Heart right ventricle (tissue), 16 donors: ENCODE measurements at regions of chr15 and their contacts with region 1.

Region 1: DNA sequence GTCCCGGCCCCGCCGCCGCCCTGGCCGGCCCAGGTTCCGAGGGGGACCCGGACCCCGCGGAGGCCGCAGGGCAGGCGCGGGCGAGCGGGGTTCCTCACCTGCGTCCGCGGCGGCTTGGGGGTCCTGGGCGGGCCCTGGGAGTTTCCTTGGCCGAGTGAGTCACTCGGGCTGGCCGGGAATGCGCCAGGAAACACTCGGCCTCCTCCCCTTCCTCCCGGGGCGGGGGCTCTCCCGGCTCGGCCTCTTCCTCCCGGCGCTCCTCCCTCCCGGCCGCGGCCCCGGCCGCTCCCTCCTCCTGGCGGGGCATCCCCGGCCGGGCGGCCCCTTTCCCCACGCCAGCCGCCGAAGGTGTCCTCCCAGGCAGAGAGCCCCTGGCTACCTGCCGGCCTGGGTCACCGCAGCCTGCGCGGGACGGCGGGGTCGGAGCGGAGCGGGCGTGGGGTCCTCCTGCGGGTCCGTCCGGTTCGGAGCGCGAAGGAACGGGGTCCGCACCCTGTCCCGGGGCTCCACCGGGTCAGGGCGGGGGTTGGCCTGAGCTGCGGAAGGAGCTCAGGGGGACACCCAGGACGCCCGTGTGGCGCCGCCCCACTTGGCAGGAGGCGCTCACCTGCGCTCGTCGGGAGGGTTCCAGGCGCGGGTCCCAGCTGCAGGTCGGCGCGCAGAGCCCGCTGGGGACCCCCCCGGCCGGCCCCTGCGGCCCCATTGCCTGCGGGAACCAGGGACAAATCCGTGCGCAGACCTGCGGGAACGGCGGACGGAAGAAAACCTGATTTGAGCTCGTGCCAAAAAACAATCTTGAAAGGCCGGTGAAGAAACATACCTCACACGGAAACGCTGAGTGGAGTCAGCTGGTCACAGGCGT is at the start of gene CYFIP1:
- DNase-seq: peak; percentile 90
- ATAC-seq: peak; percentile 95 to 98 (median 97)
- H3K4me3 ChIP-seq: peak within 1 kb of the TSS; percentile 48 to 95 (median 92)
- H3K27ac ChIP-seq: peak within 1 kb of the TSS; percentile 83 to 95 (median 88)
- H3K4me1 ChIP-seq: peaks cover 3 to 31% (median 15%) of the 10 kb centered on the region in 9 donors
- H3K27me3 ChIP-seq: peaks cover 0 to 15% (median 0%) of the 10 kb centered on the region in 7 donors
- CTCF ChIP-seq: no peak
- total RNA-seq, gene CYFIP1: 17.6 to 56.6 (median 28.7) TPM

Region 2: GRCh38 chr15:22838292-22839042 is 142.0 kb before region 1 on chr15 and contains the start of gene NIPA2:
- intact Hi-C with region 1: loop called in 1 of 10 experiments (anchors 5 kb)
- DNase-seq: peak; percentile 98 to 99
- ATAC-seq: peak; percentile 99 to 100 (median 99)
- H3K4me3 ChIP-seq: peak within 1 kb of the TSS; percentile 53 to 96 (median 86)
- H3K27ac ChIP-seq: peak within 1 kb of the TSS; percentile 79 to 99 (median 96)
- H3K4me1 ChIP-seq: peaks cover 0 to 32% (median 22%) of the 10 kb centered on the region in 9 donors
- H3K27me3 ChIP-seq: no peaks in the 10 kb centered on the region
- CTCF ChIP-seq: peak in 2 of 9 donors; percentile 21 to 22
- total RNA-seq, gene NIPA2: 16.3 to 30.3 (median 19.3) TPM

Region 3: DNA sequence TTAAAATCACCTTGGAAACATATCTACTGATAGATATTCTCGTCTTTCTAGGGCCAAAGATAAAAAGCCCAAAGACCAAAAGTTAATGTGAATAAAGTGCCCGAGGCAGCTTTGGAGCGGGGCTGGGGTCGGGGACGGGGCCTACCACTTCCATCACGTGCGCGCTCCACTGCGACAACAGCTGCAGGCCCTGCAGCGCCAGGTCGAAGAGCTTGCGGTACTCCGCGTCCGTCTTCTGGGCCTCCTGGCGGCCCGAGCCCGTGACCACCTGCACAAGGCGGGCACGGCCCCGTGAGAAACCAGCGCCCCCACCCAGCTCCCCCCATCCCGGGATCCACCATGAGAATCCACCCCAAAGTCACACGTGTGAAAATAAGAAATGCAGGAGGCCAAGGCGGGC is 52.7 kb before region 1 on chr15:
- intact Hi-C with region 1: loop called in 2 of 10 experiments (anchors 5 to 10 kb)
- DNase-seq: no peak
- ATAC-seq: no peak
- H3K4me3 ChIP-seq: no peak overlapping the region
- H3K27ac ChIP-seq: no peak overlapping the region
- H3K4me1 ChIP-seq: peaks cover 0 to 9% (median 0%) of the 10 kb centered on the region in 9 donors
- H3K27me3 ChIP-seq: no peaks in the 10 kb centered on the region
- CTCF ChIP-seq: no peak

Region 4: DNA sequence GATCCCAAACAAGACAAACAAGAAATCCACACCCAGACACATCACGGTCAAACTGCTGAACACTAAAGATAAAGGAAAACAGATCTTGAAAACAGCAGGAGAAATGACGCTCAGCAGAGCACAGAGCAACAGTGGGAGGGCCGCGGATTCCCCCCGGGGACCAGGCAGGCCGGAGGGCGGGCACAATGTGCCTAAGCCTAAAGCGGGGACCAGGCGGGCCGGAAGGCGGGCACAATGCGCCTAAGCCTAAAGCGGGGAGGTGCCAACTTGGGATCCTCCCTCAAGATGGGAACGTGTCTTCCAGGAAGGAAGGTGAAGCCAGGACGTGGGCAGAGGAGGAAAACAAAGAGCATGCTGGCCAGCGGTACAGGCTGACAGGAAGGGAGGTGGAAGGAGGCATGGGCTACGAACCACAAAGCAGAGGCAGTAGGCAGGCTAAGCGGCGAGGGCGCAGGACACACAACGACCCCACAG is 31.3 kb before region 1 on chr15:
- intact Hi-C with region 1: loop called in 3 of 10 experiments (anchors 2 to 5 kb)
- DNase-seq: peak; percentile 74 to 84
- ATAC-seq: peak; percentile 65 to 88 (median 80)
- H3K4me3 ChIP-seq: peak overlapping the region in 6 of 10 donors; percentile 14 to 39 (median 32)
- H3K27ac ChIP-seq: peak overlapping the region in 9 of 10 donors; percentile 62 to 81 (median 66)
- H3K4me1 ChIP-seq: peaks cover 4 to 82% (median 64%) of the 10 kb centered on the region in 9 donors
- H3K27me3 ChIP-seq: no peaks in the 10 kb centered on the region
- CTCF ChIP-seq: no peak

Region 5: GRCh38 chr15:23039151-23039916 is 58.9 kb after region 1 on chr15 and contains the start of gene TUBGCP5:
- intact Hi-C with region 1: loop called in 1 of 10 experiments (anchors 10 kb)
- DNase-seq: peak; percentile 97 to 99
- ATAC-seq: peak; percentile 97 to 100 (median 99)
- H3K4me3 ChIP-seq: peak within 1 kb of the TSS; percentile 55 to 85 (median 74)
- H3K27ac ChIP-seq: peak within 1 kb of the TSS in 9 of 10 donors; percentile 70 to 96 (median 88)
- H3K4me1 ChIP-seq: peaks cover 0 to 19% (median 16%) of the 10 kb centered on the region in 9 donors
- H3K27me3 ChIP-seq: no peaks in the 10 kb centered on the region
- CTCF ChIP-seq: peak in 7 of 9 donors; percentile 11 to 62 (median 56)
- total RNA-seq, gene TUBGCP5: 10.7 to 17.3 (median 13.6) TPM